Activated CD4-positive, alpha-beta T cell treated with anti-CD3 and anti-CD28 coated beads, Interleukin-2, amount 10 ng/mL, durations not matched to agents 7 days and 5 days (primary cell): ENCODE measurements at regions of chr1 and their contacts with region 1.

Region 1: GRCh38 chr1:40338745-40339424 is 21.8 kb upstream of the COL9A2 start:
- DNase-seq: peak; percentile 91
- H3K4me3 Mint-ChIP-seq: no peak overlapping the region
- H3K27ac Mint-ChIP-seq: peak overlapping the region; percentile 2
- H3K4me1 Mint-ChIP-seq: peaks cover 43% of the 10 kb centered on the region
- H3K27me3 Mint-ChIP-seq: no peaks in the 10 kb centered on the region

Region 2: DNA sequence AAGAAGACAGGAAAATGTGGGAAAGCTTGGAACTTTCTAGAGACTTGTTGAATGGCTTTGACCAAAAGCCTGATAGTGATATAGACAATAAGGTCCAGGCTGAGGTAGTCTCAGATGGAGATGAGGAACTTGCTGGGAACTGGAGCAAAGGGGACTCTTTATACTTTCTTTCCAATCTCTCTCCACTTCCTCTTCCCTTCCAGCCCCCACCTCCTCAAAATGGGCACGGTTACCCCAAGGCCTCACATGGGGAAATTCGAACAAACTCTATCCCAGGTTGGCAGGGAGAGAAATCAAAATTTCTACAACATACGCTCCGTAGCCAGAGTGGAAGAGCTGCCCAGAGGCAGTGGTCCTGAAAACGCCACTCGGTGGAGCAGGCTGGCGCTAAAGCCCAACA is 257.0 kb before region 1 on chr1:
- CTCF ChIA-PET with region 1: interaction called, 23 read pairs
- POLR2A ChIA-PET with region 1: no interaction called
- DNase-seq: no peak
- H3K4me3 Mint-ChIP-seq: no peak overlapping the region
- H3K27ac Mint-ChIP-seq: no peak overlapping the region
- H3K4me1 Mint-ChIP-seq: peaks cover 17% of the 10 kb centered on the region
- H3K27me3 Mint-ChIP-seq: no peaks in the 10 kb centered on the region

Region 3: GRCh38 chr1:40143891-40144575 is 194.9 kb before region 1 on chr1:
- CTCF ChIA-PET with region 1: interaction called, 23 read pairs
- POLR2A ChIA-PET with region 1: no interaction called
- DNase-seq: peak; percentile 71
- H3K4me3 Mint-ChIP-seq: no peak overlapping the region
- H3K27ac Mint-ChIP-seq: no peak overlapping the region
- H3K4me1 Mint-ChIP-seq: peaks cover 11% of the 10 kb centered on the region
- H3K27me3 Mint-ChIP-seq: peaks cover 36% of the 10 kb centered on the region

Region 4: GRCh38 chr1:40315239-40315794 is 23.6 kb before region 1 on chr1:
- CTCF ChIA-PET with region 1: interaction called, 95 read pairs
- POLR2A ChIA-PET with region 1: no interaction called
- DNase-seq: peak; percentile 81
- H3K4me3 Mint-ChIP-seq: peak overlapping the region; percentile 61
- H3K27ac Mint-ChIP-seq: peak overlapping the region; percentile 26
- H3K4me1 Mint-ChIP-seq: peaks cover 54% of the 10 kb centered on the region
- H3K27me3 Mint-ChIP-seq: peaks cover 25% of the 10 kb centered on the region

Region 5: GRCh38 chr1:40373338-40374283 is 34.7 kb after region 1 on chr1 and contains the start of gene SMAP2:
- CTCF ChIA-PET with region 1: interaction called, 11 read pairs
- POLR2A ChIA-PET with region 1: interaction called, 3 read pairs
- DNase-seq: peak; percentile 95
- H3K4me3 Mint-ChIP-seq: peak within 1 kb of the TSS; percentile 100
- H3K27ac Mint-ChIP-seq: peak within 1 kb of the TSS; percentile 98
- H3K4me1 Mint-ChIP-seq: peaks cover 44% of the 10 kb centered on the region
- H3K27me3 Mint-ChIP-seq: peaks cover 2% of the 10 kb centered on the region
- total RNA-seq, gene SMAP2: 115 to 140 TPM

Region 6: GRCh38 chr1:40404670-40405462 is 66.0 kb after region 1 on chr1:
- CTCF ChIA-PET with region 1: interaction called, 24 read pairs
- POLR2A ChIA-PET with region 1: no interaction called
- DNase-seq: peak; percentile 57
- H3K4me3 Mint-ChIP-seq: peak overlapping the region; percentile 25
- H3K27ac Mint-ChIP-seq: peak overlapping the region; percentile 84
- H3K4me1 Mint-ChIP-seq: peaks cover 54% of the 10 kb centered on the region
- H3K27me3 Mint-ChIP-seq: no peaks in the 10 kb centered on the region